ENCODE measurements at regions of chr7 and their contacts with region 1.

Region 1: GRCh38 chr7:92609921-92610518 is 19.8 kb upstream of the FAM133B start:
- DNase-seq: no peak
- H3K4me3 ChIP-seq: no peak overlapping the region
- H3K27ac ChIP-seq: peak overlapping the region in 23 of 59 donors; percentile 0 to 95 (median 33)
- H3K27me3 ChIP-seq: no peaks in the 10 kb centered on the region
- CTCF ChIP-seq: peak in 55 of 56 donors; percentile 15 to 69 (median 54)

Region 2: DNA sequence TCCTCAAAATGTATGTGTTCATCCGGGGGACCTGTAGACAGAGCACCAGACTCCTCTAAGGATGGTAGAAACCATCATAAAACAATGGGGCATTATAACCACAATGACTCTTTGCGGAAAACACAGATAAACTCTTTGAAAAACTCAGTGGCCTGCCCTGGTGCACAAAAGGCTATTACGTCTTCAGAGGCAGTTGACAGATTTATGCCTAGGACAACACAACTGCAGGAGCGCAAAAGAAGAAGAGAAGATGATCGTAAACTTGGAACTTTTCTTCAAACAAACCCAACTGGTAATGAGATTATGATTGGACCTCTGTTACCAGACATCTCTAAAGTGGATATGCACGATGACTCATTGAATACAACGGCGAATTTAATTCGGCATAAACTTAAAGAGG is 75.4 kb before region 1 on chr7:
- intact Hi-C with region 1: loop called in 1 of 2 experiments (anchors 5 kb)
- DNase-seq: no peak
- H3K4me3 ChIP-seq: peak overlapping the region in 14 of 59 donors; percentile 1 to 27 (median 6)
- H3K27ac ChIP-seq: peak overlapping the region in 27 of 59 donors; percentile 4 to 66 (median 25)
- H3K27me3 ChIP-seq: no peaks in the 10 kb centered on the region
- CTCF ChIP-seq: no peak

Region 3: DNA sequence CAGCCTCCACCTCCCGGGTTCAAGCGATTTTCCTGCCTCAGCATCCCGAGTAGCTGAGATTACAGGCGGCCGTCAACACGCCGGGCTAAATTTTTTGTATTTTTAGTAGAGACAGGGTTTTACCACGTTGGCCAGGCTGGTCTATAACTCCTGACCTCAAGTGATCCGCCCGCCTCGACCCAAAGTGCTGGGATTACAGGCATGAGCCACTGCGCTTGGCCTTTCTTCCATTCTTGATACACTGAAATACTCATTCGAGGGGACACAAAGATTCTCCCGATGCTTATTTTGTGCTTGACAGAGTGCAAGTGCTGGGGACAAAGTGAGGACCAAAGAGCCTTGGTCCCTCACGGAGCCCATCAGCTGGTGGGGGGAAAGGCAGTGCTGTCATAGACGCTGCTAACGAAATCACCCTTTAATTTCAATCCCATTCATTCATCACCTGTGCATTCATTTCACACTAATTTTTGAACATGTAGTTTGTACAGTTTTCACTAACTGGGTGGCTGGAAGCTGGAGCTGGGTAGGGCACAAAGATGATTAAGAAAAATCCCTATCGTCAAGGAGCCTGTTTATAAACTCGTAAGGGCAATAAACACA is 19.2 kb before region 1 on chr7:
- intact Hi-C with region 1: loop called (anchors 2 kb)
- DNase-seq: peak in 3 of 10 donors; percentile 14 to 42 (median 36)
- H3K4me3 ChIP-seq: peak overlapping the region; percentile 57 to 95 (median 84)
- H3K27ac ChIP-seq: peak overlapping the region in 52 of 59 donors; percentile 76 to 99 (median 93)
- H3K27me3 ChIP-seq: no peaks in the 10 kb centered on the region
- CTCF ChIP-seq: no peak

Region 4: GRCh38 chr7:92768501-92769393 is 158.7 kb after region 1 on chr7:
- intact Hi-C with region 1: no loop called
- DNase-seq: peak in 1 of 10 donors; percentile 29
- H3K4me3 ChIP-seq: peak overlapping the region in 26 of 59 donors; percentile 7 to 44 (median 22)
- H3K27ac ChIP-seq: peak overlapping the region in 58 of 59 donors; percentile 14 to 86 (median 74)
- H3K27me3 ChIP-seq: no peaks in the 10 kb centered on the region
- CTCF ChIP-seq: no peak

Region 5: GRCh38 chr7:93055543-93056107 is 445.6 kb after region 1 on chr7:
- intact Hi-C with region 1: loop called in 1 of 2 experiments (anchors 5 kb)
- DNase-seq: no peak
- H3K4me3 ChIP-seq: peak overlapping the region in 1 of 59 donors; percentile 5
- H3K27ac ChIP-seq: no peak overlapping the region
- H3K27me3 ChIP-seq: peaks cover 0 to 4% (median 0%) of the 10 kb centered on the region in 45 donors
- CTCF ChIP-seq: peak; percentile 65 to 96 (median 82)